Mammary epithelial cell (primary cell): ENCODE measurements at regions of chr11 and their contacts with region 1.

Region 1: GRCh38 chr11:57249384-57250319 is 12.6 kb upstream of the APLNR start:
- DNase-seq: peak; percentile 70
- H3K4me3 ChIP-seq: no peak overlapping the region
- H3K27ac ChIP-seq: no peak overlapping the region
- H3K4me1 ChIP-seq: peaks cover 27% of the 10 kb centered on the region
- H3K27me3 ChIP-seq: no peaks in the 10 kb centered on the region
- CTCF ChIP-seq: peak; percentile 89 to 92

Region 2: DNA sequence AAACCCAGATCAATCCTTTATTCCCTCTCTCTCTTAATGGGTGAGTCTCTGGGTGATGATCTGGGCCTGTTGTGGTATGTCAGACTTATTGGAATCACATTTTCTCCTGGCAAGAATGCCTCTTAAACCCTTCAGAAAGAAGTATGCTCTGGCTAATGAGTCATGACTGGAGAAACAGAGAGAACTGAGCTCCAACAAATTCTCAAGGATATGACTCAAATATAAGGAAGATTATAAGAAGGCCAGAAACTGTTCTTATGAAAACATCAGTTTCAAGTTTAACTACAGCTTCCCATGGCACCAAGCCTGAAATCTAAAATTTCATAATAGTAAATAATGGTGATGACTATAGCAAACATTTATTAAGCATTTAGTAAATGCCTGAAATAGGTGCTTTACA is 177.0 kb before region 1 on chr11:
- CTCF ChIA-PET with region 1: no interaction called
- dilution Hi-C with region 1: no loop called
- in situ Hi-C with region 1: no loop called
- intact Hi-C with region 1: no loop called
- DNase-seq: peak; percentile 97
- H3K4me3 ChIP-seq: no peak overlapping the region
- H3K27ac ChIP-seq: peak overlapping the region; percentile 59
- H3K4me1 ChIP-seq: peaks cover 23% of the 10 kb centered on the region
- H3K27me3 ChIP-seq: no peaks in the 10 kb centered on the region
- CTCF ChIP-seq: no peak

Region 3: DNA sequence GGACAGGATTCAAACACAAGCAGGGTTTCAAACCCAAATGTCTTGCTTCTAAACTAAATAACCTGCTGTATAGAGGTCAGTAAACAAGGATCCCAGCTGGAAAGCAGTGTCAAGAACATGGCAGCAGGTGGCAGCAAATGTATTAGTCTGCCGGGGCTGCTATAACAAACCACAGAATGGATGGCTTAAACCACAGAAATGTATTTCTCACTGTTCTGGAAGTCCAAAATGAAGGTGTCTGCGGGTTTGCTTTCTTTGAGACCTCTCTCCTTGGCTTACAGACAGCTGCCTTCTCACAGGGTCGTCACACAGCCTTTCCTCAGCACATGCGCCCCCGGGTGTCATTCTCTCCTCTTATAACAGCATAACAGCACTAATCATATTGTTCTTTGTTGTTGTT is 133.0 kb before region 1 on chr11:
- CTCF ChIA-PET with region 1: interaction called, 3 read pairs
- dilution Hi-C with region 1: no loop called
- in situ Hi-C with region 1: no loop called
- intact Hi-C with region 1: loop called (anchors 1 kb)
- DNase-seq: peak; percentile 66
- H3K4me3 ChIP-seq: no peak overlapping the region
- H3K27ac ChIP-seq: no peak overlapping the region
- H3K4me1 ChIP-seq: no peaks in the 10 kb centered on the region
- H3K27me3 ChIP-seq: no peaks in the 10 kb centered on the region
- CTCF ChIP-seq: peak; percentile 58 to 62

Region 4: DNA sequence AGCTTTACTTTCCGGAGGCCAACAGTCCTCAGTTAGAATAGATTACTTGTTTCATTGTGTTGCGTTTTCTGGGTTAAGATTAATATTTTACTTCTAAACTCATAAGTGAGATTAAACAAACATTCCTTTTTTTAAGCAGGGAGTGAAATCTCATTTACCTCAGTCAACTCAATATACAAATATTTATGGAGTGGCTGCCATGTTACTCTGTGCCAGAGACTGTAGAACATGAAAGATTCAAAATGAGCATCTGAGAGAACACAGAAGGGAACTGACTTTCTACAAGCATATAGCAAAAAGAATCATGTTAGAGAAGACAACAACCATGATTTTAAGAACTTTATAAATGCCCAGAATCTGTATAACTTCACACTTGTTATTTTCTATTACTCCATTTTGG is 71.3 kb before region 1 on chr11:
- CTCF ChIA-PET with region 1: interaction called, 11 read pairs
- dilution Hi-C with region 1: no loop called
- in situ Hi-C with region 1: no loop called
- intact Hi-C with region 1: no loop called
- DNase-seq: no peak
- H3K4me3 ChIP-seq: no peak overlapping the region
- H3K27ac ChIP-seq: no peak overlapping the region
- H3K4me1 ChIP-seq: no peaks in the 10 kb centered on the region
- H3K27me3 ChIP-seq: peaks cover 21% of the 10 kb centered on the region
- CTCF ChIP-seq: no peak

Region 5: GRCh38 chr11:57277845-57278709 is 28.4 kb after region 1 on chr11:
- CTCF ChIA-PET with region 1: interaction called, 5 read pairs
- dilution Hi-C with region 1: no loop called
- in situ Hi-C with region 1: no loop called
- intact Hi-C with region 1: loop called (anchors 1 kb)
- DNase-seq: peak; percentile 64
- H3K4me3 ChIP-seq: no peak overlapping the region
- H3K27ac ChIP-seq: peak overlapping the region; percentile 62
- H3K4me1 ChIP-seq: peaks cover 36% of the 10 kb centered on the region
- H3K27me3 ChIP-seq: no peaks in the 10 kb centered on the region
- CTCF ChIP-seq: peak; percentile 82 to 93

Region 6: DNA sequence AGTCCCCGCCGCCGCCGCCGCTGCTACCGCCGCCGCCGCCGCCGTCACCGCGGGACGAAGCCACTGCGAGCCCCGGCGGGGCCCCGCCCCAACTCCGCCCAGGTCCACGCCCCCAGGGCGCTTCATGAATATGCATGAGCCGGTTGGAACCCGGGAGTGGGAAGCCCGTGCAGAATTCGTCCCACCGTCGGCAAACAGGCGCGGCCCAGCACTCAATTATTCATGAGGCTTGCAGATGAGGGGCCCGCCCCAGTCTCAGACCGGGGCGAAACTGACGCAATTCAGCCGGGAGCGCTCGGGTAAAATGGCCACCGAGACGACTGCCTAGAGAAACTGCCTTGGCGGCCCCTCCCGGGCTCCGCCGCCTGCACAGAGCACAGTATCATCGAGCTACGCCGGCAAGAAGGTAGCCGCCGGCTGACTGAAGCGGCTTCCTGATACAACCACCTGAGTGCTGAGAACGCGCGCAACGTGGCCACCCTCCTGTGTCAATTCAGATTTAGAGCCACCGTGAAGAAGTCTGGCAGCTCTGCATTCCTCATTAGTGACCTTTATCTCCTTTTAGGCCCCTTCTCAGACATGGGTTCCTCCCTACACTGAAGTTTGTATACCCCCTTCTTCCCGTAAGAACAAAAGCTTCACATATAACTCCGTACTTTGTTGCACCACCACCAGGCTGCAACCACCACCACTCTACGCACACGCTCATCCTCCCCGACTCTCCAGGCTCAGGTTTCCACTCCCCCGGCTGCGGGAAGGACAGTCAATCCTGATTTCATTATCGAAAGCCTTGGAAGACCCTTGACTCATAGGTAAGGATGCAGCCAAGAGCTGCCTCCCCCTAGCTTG is 75.5 kb after region 1 on chr11 and contains the start of gene TNKS1BP1:
- CTCF ChIA-PET with region 1: interaction called, 10 read pairs
- dilution Hi-C with region 1: no loop called
- in situ Hi-C with region 1: no loop called
- intact Hi-C with region 1: no loop called
- DNase-seq: peak; percentile 97
- H3K4me3 ChIP-seq: peak within 1 kb of the TSS; percentile 82 to 90 (median 90)
- H3K27ac ChIP-seq: peak within 1 kb of the TSS; percentile 96
- H3K4me1 ChIP-seq: peaks cover 50% of the 10 kb centered on the region
- H3K27me3 ChIP-seq: no peaks in the 10 kb centered on the region
- CTCF ChIP-seq: no peak
- total RNA-seq, gene TNKS1BP1: 195 to 208 TPM

Region 7: GRCh38 chr11:57536947-57537619 is 287.4 kb after region 1 on chr11 and contains the start of gene SMTNL1:
- CTCF ChIA-PET with region 1: no interaction called
- dilution Hi-C with region 1: no loop called
- in situ Hi-C with region 1: no loop called
- intact Hi-C with region 1: no loop called
- DNase-seq: no peak
- H3K4me3 ChIP-seq: no peak within 1 kb of the TSS
- H3K27ac ChIP-seq: no peak within 1 kb of the TSS
- H3K4me1 ChIP-seq: peaks cover 5% of the 10 kb centered on the region
- H3K27me3 ChIP-seq: no peaks in the 10 kb centered on the region
- CTCF ChIP-seq: no peak
- total RNA-seq, gene SMTNL1: not detected